AG04450 (cell line): ENCODE measurements at regions of chr4 and their contacts with region 1.

Region 1: DNA sequence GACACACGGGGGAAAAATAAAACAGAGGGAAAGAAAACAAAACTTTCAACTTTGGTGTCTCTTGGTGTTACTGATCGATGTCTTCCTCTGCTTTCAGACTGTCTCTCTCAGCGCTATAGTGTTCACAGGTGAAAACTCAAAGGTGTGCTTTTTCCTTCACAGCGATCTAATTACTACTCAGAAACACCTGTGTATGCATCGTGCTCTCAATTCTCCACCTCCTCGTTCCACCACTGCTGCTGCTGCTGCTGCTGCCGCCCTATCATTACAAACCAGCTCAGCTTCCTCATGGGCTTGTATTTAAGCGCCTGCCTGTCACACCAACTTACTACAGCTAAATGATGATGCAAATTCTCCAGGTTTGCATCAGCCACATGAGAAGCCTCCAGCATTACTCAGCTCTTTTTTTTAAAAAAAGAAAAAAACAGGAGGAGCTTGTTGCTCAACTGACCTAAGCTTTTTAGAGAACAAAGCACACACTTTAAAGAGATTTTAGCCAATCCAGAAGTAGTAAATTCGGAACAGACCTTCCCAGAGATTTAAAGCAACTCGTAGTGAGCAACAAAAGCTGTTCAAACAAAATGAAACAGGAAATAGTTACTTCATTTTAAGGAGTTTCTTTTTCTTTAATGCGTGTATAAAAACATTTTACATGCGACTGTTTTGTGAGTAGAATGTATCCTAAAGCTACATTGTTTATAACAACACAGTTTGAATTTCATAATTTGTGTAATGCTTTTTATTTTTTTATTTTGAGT is at the start of gene SLC7A11:
- DNase-seq: peak; percentile 96
- H3K4me3 ChIP-seq: peak within 1 kb of the TSS; percentile 72
- H3K27ac ChIP-seq: peak within 1 kb of the TSS; percentile 98
- H3K27me3 ChIP-seq: no peaks in the 10 kb centered on the region
- CTCF ChIP-seq: no peak
- polyA plus RNA-seq, gene SLC7A11: 59.2 and 80.5 TPM in 2 replicates

Region 2: DNA sequence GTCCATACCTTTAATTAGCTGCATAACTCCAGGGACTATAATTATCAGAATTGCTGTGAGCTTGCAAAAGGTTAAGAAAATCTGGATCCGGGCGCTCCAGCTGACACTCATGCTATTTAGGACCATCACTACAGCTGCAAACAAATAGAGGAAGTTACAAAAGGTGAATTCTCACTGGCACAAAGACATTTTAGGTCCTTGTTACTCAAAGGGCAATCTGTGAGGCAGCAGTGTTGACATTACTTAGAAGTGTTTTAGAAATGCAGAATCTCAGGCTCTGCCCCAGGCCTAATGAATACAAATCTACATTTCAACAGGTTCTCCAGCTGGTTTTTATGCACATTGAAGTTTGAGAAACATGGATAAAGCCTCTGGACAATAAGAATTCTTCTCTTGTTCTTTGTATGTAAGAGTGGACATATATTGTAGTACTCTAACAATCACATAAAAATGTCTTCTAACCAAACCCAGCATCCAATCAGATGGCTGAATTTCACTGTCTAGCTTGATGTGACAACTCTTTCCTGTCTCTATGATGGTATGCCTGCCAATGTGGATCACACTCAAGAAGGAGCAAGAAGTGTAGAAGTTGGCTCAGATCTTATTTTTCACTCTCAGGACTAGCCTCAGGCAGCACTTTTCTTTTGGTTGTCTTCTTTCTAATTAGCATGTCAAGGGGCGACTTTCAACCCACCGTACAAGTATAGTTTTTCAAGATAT is 18.9 kb before region 1 on chr4:
- CTCF ChIA-PET with region 1: interaction called, 10 read pairs
- POLR2A ChIA-PET with region 1: interaction called, 7 read pairs
- DNase-seq: no peak
- H3K4me3 ChIP-seq: no peak overlapping the region
- H3K27ac ChIP-seq: no peak overlapping the region
- H3K27me3 ChIP-seq: no peaks in the 10 kb centered on the region
- CTCF ChIP-seq: no peak